Mammary epithelial cell (primary cell): ENCODE measurements at regions of chr10 and their contacts with region 1.

Region 1: DNA sequence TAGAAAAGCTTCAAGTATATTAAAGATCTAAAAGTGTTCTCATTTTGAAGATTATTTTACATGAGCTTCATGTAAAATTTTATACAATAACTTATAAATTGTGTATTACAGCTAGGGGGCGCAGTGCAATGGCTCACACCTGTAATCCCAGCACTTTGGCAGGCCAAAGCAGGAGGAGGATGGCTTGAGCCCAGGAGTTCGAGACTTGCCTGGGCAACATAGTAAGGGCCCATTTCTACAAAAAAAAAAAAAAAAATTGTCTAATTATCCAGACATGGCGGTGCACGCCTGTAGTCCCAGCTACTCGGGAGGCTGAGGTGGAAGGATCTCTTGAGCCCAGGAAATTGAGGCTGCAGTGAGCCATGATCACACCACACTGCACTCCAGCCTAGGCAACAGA is 16.6 kb downstream of the ACBD5 start:
- DNase-seq: peak; percentile 5
- H3K4me3 ChIP-seq: no peak overlapping the region
- H3K27ac ChIP-seq: no peak overlapping the region
- H3K4me1 ChIP-seq: no peaks in the 10 kb centered on the region
- H3K27me3 ChIP-seq: no peaks in the 10 kb centered on the region
- CTCF ChIP-seq: peak; percentile 24 to 53

Region 2: GRCh38 chr10:26881600-26882331 is 342.2 kb before region 1 on chr10:
- CTCF ChIA-PET with region 1: no interaction called
- dilution Hi-C with region 1: no loop called
- in situ Hi-C with region 1: no loop called
- intact Hi-C with region 1: no loop called
- DNase-seq: peak; percentile 55
- H3K4me3 ChIP-seq: no peak overlapping the region
- H3K27ac ChIP-seq: no peak overlapping the region
- H3K4me1 ChIP-seq: no peaks in the 10 kb centered on the region
- H3K27me3 ChIP-seq: no peaks in the 10 kb centered on the region
- CTCF ChIP-seq: peak; percentile 83 to 89

Region 3: DNA sequence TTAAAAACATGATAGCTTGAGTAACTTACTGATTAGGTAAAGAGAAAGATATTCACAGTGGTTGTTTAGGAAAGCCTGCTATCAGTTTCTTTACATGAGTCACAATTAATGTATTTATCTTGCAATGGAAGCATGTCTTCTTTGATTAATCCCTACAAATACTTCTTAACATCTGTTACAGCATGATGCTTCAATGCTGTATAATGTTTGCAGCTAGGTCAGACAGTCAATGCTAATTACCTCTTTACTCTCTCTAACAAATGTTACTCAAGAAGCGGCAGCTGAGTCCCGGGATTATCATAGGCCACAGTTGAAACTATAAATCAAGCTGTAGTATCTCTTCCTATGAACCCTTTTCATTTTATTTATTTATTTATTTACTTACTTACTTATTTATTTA is 16.6 kb before region 1 on chr10:
- CTCF ChIA-PET with region 1: interaction called, 17 read pairs
- dilution Hi-C with region 1: no loop called
- in situ Hi-C with region 1: no loop called
- intact Hi-C with region 1: no loop called
- DNase-seq: no peak
- H3K4me3 ChIP-seq: no peak overlapping the region
- H3K27ac ChIP-seq: no peak overlapping the region
- H3K4me1 ChIP-seq: no peaks in the 10 kb centered on the region
- H3K27me3 ChIP-seq: no peaks in the 10 kb centered on the region
- CTCF ChIP-seq: no peak

Region 4: GRCh38 chr10:27276581-27276980 is 52.6 kb after region 1 on chr10:
- CTCF ChIA-PET with region 1: interaction called, 10 read pairs
- dilution Hi-C with region 1: no loop called
- in situ Hi-C with region 1: no loop called
- intact Hi-C with region 1: no loop called
- DNase-seq: no peak
- H3K4me3 ChIP-seq: no peak overlapping the region
- H3K27ac ChIP-seq: no peak overlapping the region
- H3K4me1 ChIP-seq: no peaks in the 10 kb centered on the region
- H3K27me3 ChIP-seq: no peaks in the 10 kb centered on the region
- CTCF ChIP-seq: no peak